Activated T-helper 2 cell treated with anti-CD3 and anti-CD28 coated beads, Interferon-gamma antibody, Interleukin-2, Interleukin-4, amounts not matched to agents 10 μg/mL and 5 μg/mL and 100 μg/mL, durations not matched to agents 14 hours and 24 hours and 36 hours (primary cell): ENCODE measurements at regions of chrX and their contacts with region 1.

Region 1: GRCh38 chrX:111123125-111123524 is 27.1 kb downstream of the PAK3 start:
- DNase-seq: no peak
- H3K4me3 Mint-ChIP-seq: peak overlapping the region; percentile 66
- H3K27ac Mint-ChIP-seq: peak overlapping the region; percentile 89
- H3K4me1 Mint-ChIP-seq: peaks cover 26% of the 10 kb centered on the region
- H3K27me3 Mint-ChIP-seq: no peaks in the 10 kb centered on the region

Region 2: GRCh38 chrX:111168314-111168713 is 45.2 kb after region 1 on chrX:
- intact Hi-C with region 1: loop called (anchors 5 kb)
- DNase-seq: no peak
- H3K4me3 Mint-ChIP-seq: no peak overlapping the region
- H3K27ac Mint-ChIP-seq: no peak overlapping the region
- H3K4me1 Mint-ChIP-seq: peaks cover 12% of the 10 kb centered on the region
- H3K27me3 Mint-ChIP-seq: peaks cover 1% of the 10 kb centered on the region